Activated naive CD4-positive, alpha-beta T cell treated with anti-CD3 and anti-CD28 coated beads for 36 hours (primary cell): ENCODE measurements at regions of chr12 and their contacts with region 1.

Region 1: GRCh38 chr12:46372544-46373110 is at the start of gene SLC38A2:
- DNase-seq: peak; percentile 97
- H3K4me3 Mint-ChIP-seq: peak within 1 kb of the TSS; percentile 96
- H3K27ac Mint-ChIP-seq: peak within 1 kb of the TSS; percentile 98
- H3K4me1 Mint-ChIP-seq: peaks cover 51% of the 10 kb centered on the region
- H3K27me3 Mint-ChIP-seq: no peaks in the 10 kb centered on the region
- total RNA-seq, gene SLC38A2: 196 to 206 TPM

Region 2: GRCh38 chr12:46153268-46153872 is 219.3 kb before region 1 on chr12:
- CTCF ChIA-PET with region 1: interaction called, 3 read pairs
- intact Hi-C with region 1: loop called (anchors 1 kb)
- DNase-seq: no peak
- H3K4me3 Mint-ChIP-seq: no peak overlapping the region
- H3K27ac Mint-ChIP-seq: no peak overlapping the region
- H3K4me1 Mint-ChIP-seq: peaks cover 12% of the 10 kb centered on the region
- H3K27me3 Mint-ChIP-seq: peaks cover under 1% of the 10 kb centered on the region

Region 3: GRCh38 chr12:46268590-46269558 is 103.8 kb before region 1 on chr12 and contains the start of gene SLC38A1:
- CTCF ChIA-PET with region 1: no interaction called
- intact Hi-C with region 1: loop called (anchors 1 kb)
- DNase-seq: peak; percentile 92
- H3K4me3 Mint-ChIP-seq: no peak within 1 kb of the TSS
- H3K27ac Mint-ChIP-seq: no peak within 1 kb of the TSS
- H3K4me1 Mint-ChIP-seq: peaks cover 34% of the 10 kb centered on the region
- H3K27me3 Mint-ChIP-seq: no peaks in the 10 kb centered on the region
- total RNA-seq, gene SLC38A1: 105 to 110 TPM

Region 4: DNA sequence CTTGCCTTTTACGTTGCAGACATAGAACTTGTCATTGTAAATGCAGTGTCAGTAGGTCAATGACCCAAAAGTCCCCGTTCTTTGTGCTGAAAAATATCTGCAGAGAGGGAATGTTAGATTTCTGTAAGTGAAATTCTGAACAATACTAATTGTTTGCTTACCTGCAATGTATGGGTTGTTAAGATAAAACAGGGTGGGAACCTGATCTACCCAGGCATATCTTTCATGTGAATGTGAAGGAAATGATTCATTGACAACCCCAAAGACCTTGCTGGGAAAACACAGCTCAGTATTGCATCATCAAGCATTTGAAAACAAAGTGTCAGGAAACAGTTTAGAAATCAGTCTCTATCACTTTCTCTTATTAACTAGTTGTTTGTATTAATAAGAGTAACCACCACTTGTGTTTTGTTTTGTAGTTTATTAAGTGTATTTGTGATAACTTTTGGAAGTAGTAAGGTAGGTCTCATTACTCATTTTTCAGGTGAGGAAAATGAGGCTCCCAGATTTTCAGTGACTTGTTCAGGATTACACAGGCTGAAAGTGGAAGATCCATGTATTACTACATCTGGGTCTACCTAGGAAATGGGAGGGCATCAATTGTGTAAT is 57.8 kb after region 1 on chr12:
- CTCF ChIA-PET with region 1: no interaction called
- intact Hi-C with region 1: loop called (anchors 1 kb)
- DNase-seq: peak; percentile 64
- H3K4me3 Mint-ChIP-seq: peak overlapping the region; percentile 53
- H3K27ac Mint-ChIP-seq: peak overlapping the region; percentile 82
- H3K4me1 Mint-ChIP-seq: peaks cover 30% of the 10 kb centered on the region
- H3K27me3 Mint-ChIP-seq: no peaks in the 10 kb centered on the region

Region 5: DNA sequence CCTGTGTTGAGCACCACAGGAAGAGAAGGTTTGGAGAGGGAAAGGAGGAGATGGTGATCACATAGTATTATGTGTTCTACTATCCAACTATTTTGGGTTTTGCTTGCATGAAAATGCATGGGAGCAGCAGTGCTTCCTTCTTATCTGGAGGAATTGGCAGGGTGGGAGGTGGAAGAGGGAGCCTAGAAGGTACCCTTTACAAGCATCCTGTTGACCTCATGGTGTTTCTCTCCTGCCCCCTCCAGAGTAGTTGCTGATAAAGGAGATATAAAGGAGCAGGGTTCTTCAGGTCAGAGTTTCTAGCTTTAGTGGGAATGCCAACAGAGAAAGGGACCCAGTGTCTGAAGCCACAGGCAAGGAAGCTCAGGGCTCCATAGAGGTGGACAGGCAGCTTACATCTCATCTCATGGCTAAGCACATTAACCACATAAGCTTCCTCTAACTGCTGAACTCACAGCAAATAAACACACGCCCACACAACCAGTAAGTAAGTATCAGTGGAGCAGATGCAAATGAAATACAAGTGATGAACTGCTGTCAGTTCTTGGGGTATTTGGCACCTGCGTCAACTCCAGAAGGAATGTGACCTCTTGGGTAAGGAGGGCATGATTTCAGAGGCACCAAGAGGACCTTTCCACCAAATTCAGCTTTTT is 174.1 kb after region 1 on chr12:
- CTCF ChIA-PET with region 1: interaction called, 4 read pairs
- intact Hi-C with region 1: loop called (anchors 1 kb)
- DNase-seq: peak; percentile 45
- H3K4me3 Mint-ChIP-seq: no peak overlapping the region
- H3K27ac Mint-ChIP-seq: peak overlapping the region; percentile 74
- H3K4me1 Mint-ChIP-seq: peaks cover 58% of the 10 kb centered on the region
- H3K27me3 Mint-ChIP-seq: no peaks in the 10 kb centered on the region

Region 6: GRCh38 chr12:47276621-47277309 is 904.1 kb after region 1 on chr12:
- CTCF ChIA-PET with region 1: no interaction called
- intact Hi-C with region 1: loop called (anchors 10 kb)
- DNase-seq: peak; percentile 78
- H3K4me3 Mint-ChIP-seq: peak overlapping the region; percentile 30
- H3K27ac Mint-ChIP-seq: peak overlapping the region; percentile 88
- H3K4me1 Mint-ChIP-seq: peaks cover 86% of the 10 kb centered on the region
- H3K27me3 Mint-ChIP-seq: no peaks in the 10 kb centered on the region

Region 7: GRCh38 chr12:48105862-48106680 is 1733.4 kb after region 1 on chr12 and contains the start of gene SENP1:
- CTCF ChIA-PET with region 1: no interaction called
- intact Hi-C with region 1: loop called (anchors 5 kb)
- DNase-seq: peak; percentile 94
- H3K4me3 Mint-ChIP-seq: peak within 1 kb of the TSS; percentile 87
- H3K27ac Mint-ChIP-seq: peak within 1 kb of the TSS; percentile 96
- H3K4me1 Mint-ChIP-seq: peaks cover 47% of the 10 kb centered on the region
- H3K27me3 Mint-ChIP-seq: no peaks in the 10 kb centered on the region
- total RNA-seq, gene SENP1: 41.4 to 47.8 TPM